PC-9 (cell line): ENCODE measurements at regions of chr2 and their contacts with region 1.

Region 1: GRCh38 chr2:161104054-161104553 is 56.1 kb upstream of the TANK start:
- DNase-seq: no peak
- H3K4me3 ChIP-seq: no peak overlapping the region
- H3K27ac ChIP-seq: no peak overlapping the region
- H3K4me1 ChIP-seq: peaks cover 20% of the 10 kb centered on the region
- H3K27me3 ChIP-seq: no peaks in the 10 kb centered on the region
- CTCF ChIP-seq: no peak

Region 2: GRCh38 chr2:159832858-159833257 is 1271.2 kb before region 1 on chr2:
- CTCF ChIA-PET with region 1: no interaction called
- POLR2A ChIA-PET with region 1: interaction called, 10 read pairs
- intact Hi-C with region 1: no loop called
- DNase-seq: no peak
- H3K4me3 ChIP-seq: no peak overlapping the region
- H3K27ac ChIP-seq: no peak overlapping the region
- H3K4me1 ChIP-seq: no peaks in the 10 kb centered on the region
- H3K27me3 ChIP-seq: no peaks in the 10 kb centered on the region
- CTCF ChIP-seq: no peak

Region 3: DNA sequence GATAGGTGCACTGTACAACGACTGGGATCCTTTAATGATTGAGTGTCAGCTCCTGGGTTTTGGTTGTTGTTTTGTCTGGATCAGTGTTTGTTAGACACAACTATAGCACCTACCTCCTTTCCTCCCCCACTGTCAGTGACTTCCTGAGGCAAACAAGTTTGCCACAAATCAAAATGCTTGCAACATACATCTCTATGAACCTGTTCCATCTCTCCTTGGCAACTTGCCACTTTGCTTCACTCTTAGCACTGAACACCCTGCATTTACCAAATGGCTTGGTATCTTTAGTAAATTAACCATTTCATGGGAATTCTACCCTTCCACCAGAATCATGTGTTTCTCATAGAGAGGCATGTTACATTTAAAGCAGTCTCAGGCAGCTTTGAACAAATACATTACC is 245.0 kb before region 1 on chr2:
- CTCF ChIA-PET with region 1: no interaction called
- POLR2A ChIA-PET with region 1: no interaction called
- intact Hi-C with region 1: no loop called
- DNase-seq: peak in 1 of 2 experiments; percentile 35
- H3K4me3 ChIP-seq: no peak overlapping the region
- H3K27ac ChIP-seq: no peak overlapping the region
- H3K4me1 ChIP-seq: peaks cover 9% of the 10 kb centered on the region
- H3K27me3 ChIP-seq: no peaks in the 10 kb centered on the region
- CTCF ChIP-seq: no peak

Region 4: GRCh38 chr2:161004379-161004778 is 99.7 kb before region 1 on chr2:
- CTCF ChIA-PET with region 1: no interaction called
- POLR2A ChIA-PET with region 1: no interaction called
- intact Hi-C with region 1: no loop called
- DNase-seq: no peak
- H3K4me3 ChIP-seq: no peak overlapping the region
- H3K27ac ChIP-seq: no peak overlapping the region
- H3K4me1 ChIP-seq: no peaks in the 10 kb centered on the region
- H3K27me3 ChIP-seq: no peaks in the 10 kb centered on the region
- CTCF ChIP-seq: peak; percentile 50; the same call in 1 of the 2 replicates

Region 5: DNA sequence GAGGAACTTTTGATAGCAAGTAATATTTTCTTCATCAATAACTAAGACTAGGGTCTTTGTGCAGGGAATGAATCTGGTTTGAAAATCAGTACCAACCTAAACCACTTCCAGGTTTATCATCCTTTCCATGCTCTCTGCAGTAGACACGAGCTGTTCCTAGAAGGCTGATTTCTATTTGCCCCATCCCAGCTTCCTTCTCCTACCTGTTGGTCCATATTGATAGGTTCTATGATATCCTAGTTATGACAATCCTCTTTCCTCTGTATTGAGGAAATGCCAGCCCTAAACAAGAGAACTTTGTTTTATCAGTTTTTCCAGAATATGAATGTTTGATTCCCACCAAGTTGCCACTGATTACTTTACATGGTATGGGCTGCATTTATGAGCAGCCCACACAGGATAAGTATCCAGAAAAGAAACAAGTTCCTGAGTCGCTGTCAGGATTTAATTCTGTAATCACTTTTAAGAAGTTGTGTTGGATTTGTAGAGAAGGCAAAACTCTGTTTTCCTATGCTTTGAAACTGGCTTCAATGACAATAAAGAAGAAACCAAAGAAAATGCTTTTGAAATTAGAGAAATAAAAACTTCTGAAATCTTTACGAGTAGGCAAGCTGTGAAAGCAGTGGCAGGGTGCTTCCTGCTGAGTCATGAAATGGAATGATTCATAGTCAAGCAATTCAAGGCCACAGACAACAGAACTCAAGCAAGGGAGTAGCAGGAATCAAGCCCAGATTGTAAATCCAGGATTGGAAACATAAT is 18.8 kb after region 1 on chr2:
- CTCF ChIA-PET with region 1: no interaction called
- POLR2A ChIA-PET with region 1: no interaction called
- intact Hi-C with region 1: loop called (anchors 2 kb)
- DNase-seq: peak; percentile 36 to 80
- H3K4me3 ChIP-seq: peak overlapping the region; percentile 47; the same call in 1 of the 2 replicates
- H3K27ac ChIP-seq: peak overlapping the region; percentile 99
- H3K4me1 ChIP-seq: peaks cover 47% of the 10 kb centered on the region
- H3K27me3 ChIP-seq: no peaks in the 10 kb centered on the region
- CTCF ChIP-seq: no peak